ENCODE measurements at regions of chr1 and their contacts with region 1.

Region 1: DNA sequence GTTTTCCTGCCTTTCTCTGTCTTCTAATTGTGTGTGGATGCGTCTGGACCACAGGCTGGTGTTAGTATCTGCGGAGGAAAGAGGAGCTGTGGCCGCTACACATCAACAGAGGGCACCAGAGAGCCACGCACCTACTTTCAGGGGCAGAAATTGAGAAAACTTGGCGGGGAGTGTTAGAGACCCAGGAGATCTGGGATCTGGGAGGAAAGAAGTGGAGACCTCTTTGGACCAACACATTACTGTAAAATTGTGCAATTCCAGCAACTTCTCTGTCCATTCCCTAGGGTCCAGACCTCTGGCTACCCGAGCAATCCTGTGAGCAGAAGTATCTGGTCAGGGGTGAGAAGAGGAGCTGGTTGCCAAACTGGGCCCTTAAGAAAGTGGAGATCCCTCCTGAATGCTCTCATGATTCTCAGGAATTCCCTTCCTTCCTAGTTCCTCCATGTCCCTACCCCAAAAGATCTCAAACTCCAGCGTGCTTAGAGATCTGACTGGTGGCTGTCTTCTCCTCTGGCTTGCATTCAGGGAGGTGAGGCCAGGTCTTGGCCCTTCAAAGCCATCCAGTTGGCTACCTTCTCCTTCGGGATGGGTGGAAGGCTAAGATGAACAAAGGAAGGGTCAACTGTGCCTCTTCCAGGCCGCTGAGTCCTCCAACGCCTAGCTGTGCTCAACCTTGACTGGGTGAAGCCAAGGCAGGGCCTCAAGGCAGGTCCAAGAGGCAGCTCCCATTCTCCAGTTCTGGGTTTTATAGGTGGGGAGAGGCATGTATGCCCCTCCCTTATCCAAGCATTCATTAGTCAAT is 1.2 kb upstream of the KIRREL1 start:
- DNase-seq: peak; percentile 87
- H3K4me3 Mint-ChIP-seq: peak overlapping the region; percentile 72
- H3K27ac Mint-ChIP-seq: no peak overlapping the region
- H3K4me1 Mint-ChIP-seq: peaks cover 35% of the 10 kb centered on the region
- H3K27me3 Mint-ChIP-seq: no peaks in the 10 kb centered on the region
- CTCF ChIP-seq: peak; percentile 99

Region 2: GRCh38 chr1:157734321-157734720 is 257.9 kb before region 1 on chr1:
- CTCF ChIA-PET with region 1: no interaction called
- POLR2A ChIA-PET with region 1: no interaction called
- intact Hi-C with region 1: no loop called
- DNase-seq: no peak
- H3K4me3 Mint-ChIP-seq: no peak overlapping the region
- H3K27ac Mint-ChIP-seq: no peak overlapping the region
- H3K4me1 Mint-ChIP-seq: no peaks in the 10 kb centered on the region
- H3K27me3 Mint-ChIP-seq: peaks cover 15% of the 10 kb centered on the region
- CTCF ChIP-seq: no peak

Region 3: DNA sequence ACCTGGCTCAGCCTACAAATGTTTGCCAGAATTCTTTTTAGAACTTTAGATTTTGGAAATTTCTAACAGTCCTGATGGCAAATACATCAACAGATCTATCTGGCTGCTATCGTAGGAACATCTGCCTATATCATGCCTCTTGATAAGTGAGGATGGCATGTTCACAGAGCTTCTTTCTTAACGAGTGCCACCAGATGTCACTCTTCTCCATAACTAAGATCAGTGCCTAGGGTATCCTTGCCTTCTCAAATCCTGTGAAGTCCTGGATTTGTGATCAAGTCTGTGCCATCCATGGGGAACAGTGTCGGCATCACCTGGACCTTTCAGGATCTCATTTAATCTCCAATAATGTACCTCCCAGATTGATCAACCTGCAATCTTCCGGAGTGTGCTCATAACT is 114.2 kb before region 1 on chr1:
- CTCF ChIA-PET with region 1: interaction called, 11 read pairs
- POLR2A ChIA-PET with region 1: no interaction called
- intact Hi-C with region 1: loop called (anchors 1 kb)
- DNase-seq: peak; percentile 74
- H3K4me3 Mint-ChIP-seq: no peak overlapping the region
- H3K27ac Mint-ChIP-seq: no peak overlapping the region
- H3K4me1 Mint-ChIP-seq: no peaks in the 10 kb centered on the region
- H3K27me3 Mint-ChIP-seq: peaks cover 77% of the 10 kb centered on the region
- CTCF ChIP-seq: peak; percentile 57

Region 4: GRCh38 chr1:157969697-157970485 is 22.3 kb before region 1 on chr1:
- CTCF ChIA-PET with region 1: interaction called, 746 read pairs
- POLR2A ChIA-PET with region 1: interaction called, 29 read pairs
- intact Hi-C with region 1: loop called (anchors 1 kb)
- DNase-seq: peak; percentile 95
- H3K4me3 Mint-ChIP-seq: peak overlapping the region; percentile 55
- H3K27ac Mint-ChIP-seq: peak overlapping the region; percentile 49
- H3K4me1 Mint-ChIP-seq: peaks cover 28% of the 10 kb centered on the region
- H3K27me3 Mint-ChIP-seq: no peaks in the 10 kb centered on the region
- CTCF ChIP-seq: peak; percentile 94

Region 5: DNA sequence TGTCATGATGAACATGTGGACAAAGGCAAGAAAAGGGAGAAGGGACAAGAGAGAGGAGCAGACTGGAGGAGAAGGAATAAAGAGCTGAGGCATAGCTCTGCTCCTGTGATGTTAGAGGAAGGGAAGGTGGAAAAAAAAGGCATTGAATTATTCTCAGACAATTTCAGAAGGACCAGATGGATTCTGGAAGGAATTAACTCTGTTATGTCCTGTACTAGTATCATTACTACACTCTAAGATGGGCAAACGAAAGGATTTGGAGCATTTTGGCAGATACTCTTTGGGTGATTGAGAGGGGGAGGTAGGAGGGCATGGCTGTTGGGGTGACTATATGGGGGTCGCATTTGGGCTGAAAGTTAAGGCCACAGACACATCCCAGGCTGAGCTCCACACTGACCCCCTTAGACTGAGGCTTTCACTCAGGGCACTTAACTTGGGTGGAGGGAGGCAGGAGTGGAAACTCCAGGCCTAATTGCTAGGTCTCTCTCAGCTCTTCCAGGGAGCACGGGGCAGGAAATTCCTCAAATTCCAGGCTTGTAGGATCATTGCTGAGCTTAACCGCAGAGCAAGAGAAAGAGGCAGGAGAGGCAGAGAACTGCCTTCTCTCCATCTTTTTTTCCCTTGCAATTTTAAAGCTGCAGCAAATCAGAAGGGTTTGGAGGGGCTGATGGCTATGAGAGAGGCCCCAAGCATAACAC is 27.1 kb after region 1 on chr1:
- CTCF ChIA-PET with region 1: interaction called, 494 read pairs
- POLR2A ChIA-PET with region 1: interaction called, 114 read pairs
- intact Hi-C with region 1: loop called (anchors 1 kb)
- DNase-seq: peak; percentile 92
- H3K4me3 Mint-ChIP-seq: peak overlapping the region; percentile 20
- H3K27ac Mint-ChIP-seq: peak overlapping the region; percentile 86
- H3K4me1 Mint-ChIP-seq: peaks cover 74% of the 10 kb centered on the region
- H3K27me3 Mint-ChIP-seq: no peaks in the 10 kb centered on the region
- CTCF ChIP-seq: no peak

Region 6: DNA sequence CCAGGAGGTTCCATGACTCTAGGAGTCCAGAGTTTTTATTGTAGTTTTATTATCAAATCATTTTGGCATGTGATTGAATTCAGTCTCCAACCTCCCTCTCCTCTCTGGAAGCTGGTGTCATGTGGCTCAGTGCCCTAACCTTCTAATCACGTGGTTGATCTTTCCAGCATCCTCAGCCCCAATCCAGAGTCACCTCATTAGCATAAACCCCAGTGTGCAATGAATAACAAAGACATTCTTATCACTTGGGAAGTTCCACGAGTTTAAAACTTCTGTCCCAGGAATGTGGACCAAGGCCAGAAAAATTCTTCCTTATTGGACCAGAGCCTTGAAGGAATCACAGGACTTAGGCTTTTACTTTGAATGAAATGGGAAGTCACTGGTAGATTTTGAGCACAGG is 53.4 kb after region 1 on chr1:
- CTCF ChIA-PET with region 1: interaction called, 603 read pairs
- POLR2A ChIA-PET with region 1: interaction called, 4 read pairs
- intact Hi-C with region 1: no loop called
- DNase-seq: no peak
- H3K4me3 Mint-ChIP-seq: no peak overlapping the region
- H3K27ac Mint-ChIP-seq: no peak overlapping the region
- H3K4me1 Mint-ChIP-seq: peaks cover 20% of the 10 kb centered on the region
- H3K27me3 Mint-ChIP-seq: no peaks in the 10 kb centered on the region
- CTCF ChIP-seq: no peak

Region 7: DNA sequence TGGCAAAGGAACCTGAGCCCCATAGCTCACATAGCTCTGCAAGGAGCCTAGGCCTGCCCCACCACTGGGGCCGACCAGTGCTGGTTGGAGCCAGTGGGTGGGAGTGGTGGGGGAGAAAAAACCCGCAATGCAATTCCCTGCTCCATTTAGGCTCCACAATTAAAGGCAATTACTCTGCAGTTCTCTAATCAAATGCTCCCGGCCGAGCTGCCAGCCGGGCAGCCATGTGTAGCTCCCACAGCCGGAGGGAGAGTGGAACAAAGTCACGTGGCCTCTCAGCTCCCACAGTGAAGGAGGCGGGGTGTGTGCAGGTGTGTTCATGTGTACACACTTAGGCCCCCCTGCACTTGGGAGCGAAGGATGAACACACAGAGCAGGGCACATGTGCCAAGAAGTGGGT is 82.8 kb after region 1 on chr1:
- CTCF ChIA-PET with region 1: interaction called, 87 read pairs
- POLR2A ChIA-PET with region 1: no interaction called
- intact Hi-C with region 1: no loop called
- DNase-seq: no peak
- H3K4me3 Mint-ChIP-seq: no peak overlapping the region
- H3K27ac Mint-ChIP-seq: peak overlapping the region; percentile 1
- H3K4me1 Mint-ChIP-seq: peaks cover 16% of the 10 kb centered on the region
- H3K27me3 Mint-ChIP-seq: no peaks in the 10 kb centered on the region
- CTCF ChIP-seq: no peak

Region 8: DNA sequence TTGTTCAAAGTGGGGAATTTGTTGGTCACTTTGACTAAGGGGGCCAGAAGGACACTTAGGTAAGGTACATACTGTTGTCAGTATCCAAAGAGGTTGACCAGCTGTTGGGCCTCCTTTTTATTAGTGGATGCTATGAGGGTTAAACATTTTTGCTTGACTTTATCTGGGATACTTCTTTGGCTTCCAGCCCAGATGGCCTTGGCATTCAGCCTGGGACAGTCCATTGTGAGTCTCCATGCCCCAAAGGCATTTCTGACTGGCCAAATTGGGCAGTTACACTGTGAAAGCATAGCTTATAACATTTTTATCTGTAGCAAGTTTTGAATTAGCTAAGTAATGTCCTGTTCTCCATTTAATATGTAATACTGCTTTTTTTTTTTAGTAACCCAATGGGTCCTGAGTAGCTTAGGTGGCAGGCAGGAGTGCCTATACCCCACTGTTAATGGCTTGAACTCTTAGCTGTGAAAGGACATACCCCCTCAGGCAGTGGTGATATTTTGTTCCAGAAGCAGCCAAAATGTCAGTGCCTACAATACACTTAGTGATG is 153.0 kb after region 1 on chr1:
- CTCF ChIA-PET with region 1: interaction called, 40 read pairs
- POLR2A ChIA-PET with region 1: no interaction called
- intact Hi-C with region 1: no loop called
- DNase-seq: peak; percentile 98
- H3K4me3 Mint-ChIP-seq: no peak overlapping the region
- H3K27ac Mint-ChIP-seq: peak overlapping the region; percentile 21
- H3K4me1 Mint-ChIP-seq: peaks cover 44% of the 10 kb centered on the region
- H3K27me3 Mint-ChIP-seq: no peaks in the 10 kb centered on the region
- CTCF ChIP-seq: no peak

Measured in MCF 10A (cell line).